ENCODE measurements at regions of chr17 and their contacts with region 1.

Region 1: DNA sequence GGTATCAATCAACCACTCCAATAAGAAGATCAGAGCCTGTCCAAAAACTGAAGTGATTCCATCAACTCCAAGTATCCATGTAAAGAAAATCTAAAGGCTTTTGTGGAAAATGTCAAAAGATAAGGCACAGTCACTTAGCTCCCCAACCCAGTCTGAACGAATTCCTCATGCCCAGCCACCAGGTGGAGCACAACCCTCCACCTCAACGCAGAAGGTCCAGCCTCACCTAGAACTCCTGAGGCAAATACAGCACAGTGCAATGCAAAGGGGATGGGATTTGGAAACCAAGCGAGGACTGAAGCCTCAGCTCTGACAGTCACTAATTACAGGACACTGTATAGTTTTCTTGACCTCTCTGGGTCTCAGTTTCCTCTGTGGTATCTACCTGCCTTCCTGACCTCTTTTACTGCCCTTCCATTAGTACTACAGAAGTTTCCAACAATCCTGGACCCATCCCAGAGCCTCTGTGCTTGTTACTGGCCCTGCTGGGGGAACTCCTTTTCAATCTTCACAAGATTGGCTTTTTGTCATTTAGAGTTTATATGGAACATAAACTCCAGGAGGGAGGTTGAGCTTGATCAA is 2.0 kb downstream of the NCBP3 start:
- DNase-seq: peak in 2 of 3 donors; percentile 68 to 69
- ATAC-seq: peak; percentile 55
- H3K4me3 ChIP-seq: no peak overlapping the region
- H3K4me1 ChIP-seq: peaks cover 18% of the 10 kb centered on the region
- CTCF ChIP-seq: peak; percentile 26

Region 2: DNA sequence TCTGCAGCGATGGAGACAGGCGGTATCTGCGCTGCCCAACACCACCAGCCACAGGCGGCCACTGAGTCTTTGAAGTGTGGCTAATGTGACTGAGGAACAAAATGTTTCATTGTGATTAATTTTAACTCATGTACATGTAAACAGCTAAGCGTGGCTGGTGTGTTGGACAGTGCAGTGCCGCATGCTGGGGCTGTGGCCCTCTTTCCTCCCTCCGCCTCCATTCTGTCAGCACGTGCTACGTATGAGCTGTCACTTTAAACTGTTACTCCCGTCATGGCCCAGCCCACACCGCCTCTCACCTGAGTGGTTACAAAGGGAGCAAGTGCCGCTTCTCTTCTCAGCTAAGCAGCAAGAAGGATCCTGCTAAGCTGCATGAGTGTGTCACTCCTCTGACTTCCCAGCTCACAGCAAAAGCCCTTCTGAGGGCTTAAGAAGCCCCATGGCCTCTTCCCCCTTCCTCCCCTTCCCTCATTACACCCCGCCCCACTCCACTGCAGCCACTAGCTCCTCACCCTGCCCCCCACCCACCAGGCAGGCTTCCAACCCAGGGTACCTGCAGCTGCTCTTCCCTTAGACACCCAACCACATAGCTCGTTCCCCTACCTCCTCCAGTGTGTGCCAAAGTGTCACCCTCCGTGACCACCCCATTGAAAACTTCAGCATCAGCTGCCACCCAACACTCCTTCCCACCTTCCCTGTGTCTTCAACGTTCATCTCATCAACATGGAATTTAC is 105.3 kb before region 1 on chr17:
- intact Hi-C with region 1: loop called in 1 of 2 experiments (anchors 5 kb)
- DNase-seq: peak; percentile 71 to 72 (median 72)
- ATAC-seq: peak; percentile 86
- H3K4me3 ChIP-seq: no peak overlapping the region
- H3K4me1 ChIP-seq: peaks cover 13% of the 10 kb centered on the region
- CTCF ChIP-seq: no peak